ENCODE measurements at regions of chr9 and their contacts with region 1.

Region 1: GRCh38 chr9:3099646-3100045 is 255.8 kb upstream of the PUM3 start:
- DNase-seq: no peak
- H3K4me3 ChIP-seq: no peak overlapping the region
- H3K27ac ChIP-seq: no peak overlapping the region
- H3K4me1 ChIP-seq: no peaks in the 10 kb centered on the region
- H3K27me3 ChIP-seq: no peaks in the 10 kb centered on the region
- CTCF ChIP-seq: no peak

Region 2: DNA sequence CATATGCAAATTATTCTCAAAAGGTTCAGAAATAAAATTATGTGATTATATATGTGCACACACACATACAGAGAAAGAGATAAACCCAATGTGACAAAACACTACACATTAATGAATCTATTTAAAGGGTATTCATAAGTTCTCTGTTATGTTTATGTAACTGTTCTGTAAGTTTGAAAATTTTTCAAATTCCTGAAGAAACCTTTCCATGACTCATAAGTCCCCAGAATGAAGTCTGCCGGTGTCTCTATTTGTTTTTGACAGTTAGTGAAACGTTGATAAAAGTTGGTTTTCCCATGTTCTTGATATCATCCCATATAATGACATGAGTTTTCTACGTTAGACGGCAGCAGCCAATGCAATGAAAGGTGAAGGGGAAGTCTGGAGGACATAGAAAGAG is 56.3 kb before region 1 on chr9:
- intact Hi-C with region 1: loop called (anchors 10 kb)
- DNase-seq: no peak
- H3K4me3 ChIP-seq: no peak overlapping the region
- H3K27ac ChIP-seq: no peak overlapping the region
- H3K4me1 ChIP-seq: no peaks in the 10 kb centered on the region
- H3K27me3 ChIP-seq: no peaks in the 10 kb centered on the region
- CTCF ChIP-seq: no peak

Measured in left ventricle myocardium inferior (tissue), 1 donor.